GM12878 (cell line): ENCODE measurements at regions of chr22 and their contacts with region 1.

Region 1: DNA sequence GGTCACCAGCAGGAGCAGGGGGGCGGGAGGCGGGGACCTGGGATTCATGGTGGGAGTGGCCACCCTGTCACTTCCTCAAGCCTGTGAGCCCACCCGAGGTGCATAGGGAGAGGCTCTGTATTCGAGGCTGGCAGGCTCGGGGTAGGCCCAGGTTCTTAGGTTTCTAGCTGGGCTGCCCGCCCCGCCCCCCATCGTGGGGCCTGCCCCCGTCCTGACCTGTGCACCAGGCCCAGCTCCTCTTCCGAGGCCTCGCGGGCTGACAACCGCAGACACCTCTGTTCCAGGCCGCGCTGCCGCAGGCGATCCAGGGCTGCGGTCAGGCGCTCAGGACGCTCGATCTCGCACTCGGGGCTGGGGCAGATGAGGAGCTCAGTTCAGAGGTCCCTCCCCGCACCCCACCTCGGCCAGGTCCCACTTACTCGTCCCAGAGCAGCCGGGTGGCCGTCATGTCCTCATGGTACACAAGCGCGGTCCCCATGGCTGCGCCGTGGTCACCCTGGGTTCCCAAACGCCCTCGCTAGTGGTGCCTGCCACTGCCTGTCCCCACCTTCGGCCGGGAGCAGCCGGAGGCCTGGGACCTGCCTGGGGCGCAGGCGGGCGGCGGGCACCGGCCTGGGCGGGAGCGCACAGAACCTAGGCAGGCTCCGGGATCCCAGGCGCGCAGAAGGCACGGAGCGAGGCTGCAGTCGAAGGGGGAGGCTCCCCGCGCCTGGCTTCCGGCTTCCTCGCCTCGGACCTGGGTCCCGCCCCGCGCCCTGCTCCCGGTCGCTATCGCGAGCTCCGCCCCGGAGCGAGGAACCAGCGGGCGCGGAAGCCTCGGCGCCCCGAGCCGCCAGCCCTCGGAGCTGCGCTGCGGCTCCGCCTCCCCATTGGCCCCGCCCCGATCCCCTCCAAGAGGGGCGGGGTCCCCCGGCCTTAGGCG is at the start of gene HDAC10:
- DNase-seq: peak; percentile 40
- ATAC-seq: peak; percentile 91
- H3K4me3 ChIP-seq: peak within 1 kb of the TSS; percentile 98
- H3K27ac ChIP-seq: peak within 1 kb of the TSS; percentile 78
- H3K4me1 ChIP-seq: peaks cover 28% of the 10 kb centered on the region
- H3K27me3 ChIP-seq: no peaks in the 10 kb centered on the region
- CTCF ChIP-seq: no peak
- EP300 ChIP-seq: no peak
- POLR2A ChIP-seq: peak; percentile 88
- RAD21 ChIP-seq: no peak
- polyA plus RNA-seq, gene HDAC10: 0.26 to 0.51 TPM

Region 2: DNA sequence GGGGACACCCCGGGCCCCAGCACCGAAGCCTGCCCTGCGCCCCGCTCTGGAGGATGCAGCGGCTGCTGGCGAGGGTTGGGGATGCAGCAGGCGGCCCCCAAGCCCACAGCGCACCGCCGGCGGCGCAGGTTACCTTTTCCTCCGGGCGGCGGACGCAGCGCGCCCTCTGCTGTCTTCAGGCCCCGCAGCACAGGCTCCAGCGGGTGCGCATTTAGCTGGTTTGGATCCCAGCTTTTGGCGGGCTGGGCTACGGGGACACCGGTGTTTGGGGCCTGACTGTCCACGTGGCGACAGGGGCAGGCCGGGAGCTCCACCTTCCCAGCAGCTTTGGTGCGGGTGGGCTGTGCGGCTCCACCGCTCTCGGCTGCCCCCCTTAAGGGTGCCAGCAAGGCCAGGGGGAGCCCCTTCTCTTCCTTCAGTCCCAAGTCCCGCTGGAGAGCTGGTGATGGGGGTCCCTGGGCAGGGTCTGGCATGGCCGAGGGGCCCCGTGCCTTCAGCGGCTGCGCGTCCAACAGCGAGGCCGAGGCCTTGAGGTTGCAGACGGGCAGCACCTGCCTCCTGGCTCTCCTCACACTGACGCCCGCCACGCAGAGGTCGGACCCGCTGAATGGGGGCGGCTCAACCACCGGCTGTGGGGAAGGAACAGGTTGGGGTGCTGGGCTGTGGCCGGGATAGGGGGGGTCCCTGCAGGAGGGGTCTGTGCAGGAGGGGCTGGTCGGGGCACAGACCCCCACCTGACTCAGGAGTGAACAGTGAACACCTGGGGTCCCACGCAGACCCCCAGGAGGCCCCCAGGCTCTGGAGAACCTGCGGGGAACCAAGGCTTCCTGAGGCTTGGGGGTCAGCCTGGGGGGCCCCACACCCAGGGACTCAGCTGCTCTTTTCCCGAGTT is 220.3 kb before region 1 on chr22:
- CTCF ChIA-PET with region 1: no interaction called
- POLR2A ChIA-PET with region 1: no interaction called
- RAD21 ChIA-PET with region 1: no interaction called
- SMC1A ChIA-PET with region 1: no interaction called
- in situ Hi-C with region 1: no loop called
- intact Hi-C with region 1: no loop called
- DNase-seq: no peak
- ATAC-seq: peak; percentile 98
- H3K4me3 ChIP-seq: no peak overlapping the region
- H3K27ac ChIP-seq: no peak overlapping the region
- H3K4me1 ChIP-seq: peaks cover 6% of the 10 kb centered on the region; the same call in 1 of the 2 replicates
- H3K27me3 ChIP-seq: peaks cover 0 to 4% of the 10 kb centered on the region in 2 experiments; a peak in 1 of 4 replicates
- CTCF ChIP-seq: peak; percentile 84 to 94 (median 94)
- EP300 ChIP-seq: no peak
- POLR2A ChIP-seq: no peak
- RAD21 ChIP-seq: peak; percentile 91

Region 3: DNA sequence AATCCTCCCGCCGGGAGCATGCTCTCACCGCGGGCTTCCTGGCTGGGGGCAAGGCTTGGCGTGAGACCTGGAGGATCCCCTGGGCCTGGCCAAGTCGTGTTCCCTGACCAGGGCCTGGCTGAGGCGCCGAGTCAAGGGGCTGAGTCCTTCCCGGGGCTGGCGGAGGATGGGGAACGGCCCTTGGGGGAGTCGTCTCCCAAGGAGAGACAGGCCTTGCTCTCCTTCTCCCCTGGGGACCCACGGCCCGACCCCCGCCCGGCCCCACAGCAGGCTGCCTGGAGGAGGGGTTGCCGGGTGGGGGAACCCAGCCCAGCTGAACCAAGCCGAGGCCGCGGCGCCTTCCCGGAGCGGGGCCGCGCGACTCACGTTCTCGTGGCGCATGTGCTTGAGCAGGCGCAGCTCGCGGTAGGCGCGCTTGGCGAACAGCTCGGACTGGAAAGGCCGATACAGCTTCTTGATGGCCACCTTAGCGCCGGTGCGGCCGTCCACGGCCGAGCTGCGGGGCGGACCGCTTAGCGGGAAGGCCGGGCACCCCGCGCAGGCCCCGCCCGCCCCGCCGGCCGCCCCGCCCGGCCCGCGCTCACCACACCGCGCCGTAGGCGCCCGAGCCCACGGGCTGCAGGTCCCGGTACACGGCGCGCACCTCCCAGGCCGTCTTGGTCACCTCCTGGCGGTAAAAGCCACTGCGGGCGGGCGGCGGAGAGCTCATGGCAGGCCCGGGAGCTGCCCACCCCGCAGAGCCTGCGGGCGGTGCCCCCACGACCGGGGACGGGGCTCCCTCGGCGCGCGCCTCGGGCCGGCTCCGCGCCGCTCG is 10.2 kb after region 1 on chr22:
- CTCF ChIA-PET with region 1: interaction called, 10 read pairs
- POLR2A ChIA-PET with region 1: interaction called, 15 read pairs
- RAD21 ChIA-PET with region 1: interaction called, 6 read pairs
- SMC1A ChIA-PET with region 1: interaction called, 3 read pairs
- in situ Hi-C with region 1: no loop called
- intact Hi-C with region 1: no loop called
- DNase-seq: no peak
- ATAC-seq: peak; percentile 66
- H3K4me3 ChIP-seq: peak overlapping the region; percentile 89
- H3K27ac ChIP-seq: peak overlapping the region; percentile 52
- H3K4me1 ChIP-seq: peaks cover 14% of the 10 kb centered on the region
- H3K27me3 ChIP-seq: no peaks in the 10 kb centered on the region
- CTCF ChIP-seq: no peak
- EP300 ChIP-seq: no peak
- POLR2A ChIP-seq: peak; percentile 74
- RAD21 ChIP-seq: no peak

Region 4: GRCh38 chr22:50276143-50276542 is 25.3 kb after region 1 on chr22:
- CTCF ChIA-PET with region 1: interaction called, 20 read pairs
- POLR2A ChIA-PET with region 1: interaction called, 7 read pairs
- RAD21 ChIA-PET with region 1: interaction called, 3 read pairs
- SMC1A ChIA-PET with region 1: no interaction called
- in situ Hi-C with region 1: no loop called
- intact Hi-C with region 1: no loop called
- DNase-seq: peak; percentile 66
- ATAC-seq: peak; percentile 87
- H3K4me3 ChIP-seq: no peak overlapping the region
- H3K27ac ChIP-seq: no peak overlapping the region
- H3K4me1 ChIP-seq: peaks cover 3% of the 10 kb centered on the region
- H3K27me3 ChIP-seq: no peaks in the 10 kb centered on the region
- CTCF ChIP-seq: peak; percentile 62 to 77 (median 73)
- EP300 ChIP-seq: no peak
- POLR2A ChIP-seq: no peak
- RAD21 ChIP-seq: peak; percentile 36; the same call in 1 of the 2 replicates

Region 5: GRCh38 chr22:50341977-50342650 is 91.3 kb after region 1 on chr22:
- CTCF ChIA-PET with region 1: interaction called, 20 read pairs
- POLR2A ChIA-PET with region 1: interaction called, 3 read pairs
- RAD21 ChIA-PET with region 1: interaction called, 26 read pairs
- SMC1A ChIA-PET with region 1: interaction called, 5 read pairs
- in situ Hi-C with region 1: no loop called
- intact Hi-C with region 1: loop called (anchors 1 kb)
- DNase-seq: no peak
- ATAC-seq: peak; percentile 88
- H3K4me3 ChIP-seq: peak overlapping the region; percentile 80
- H3K27ac ChIP-seq: peak overlapping the region; percentile 51; the same call in 1 of the 2 replicates
- H3K4me1 ChIP-seq: 0 out of 2 replicates have a peak, but pooled peaks cover 3% of the 10 kb centered on the region
- H3K27me3 ChIP-seq: no peaks in the 10 kb centered on the region
- CTCF ChIP-seq: peak; percentile 96 to 99 (median 96); a peak in 5 of 6 replicates
- EP300 ChIP-seq: no peak
- POLR2A ChIP-seq: no peak
- RAD21 ChIP-seq: peak; percentile 93

Region 6: GRCh38 chr22:50612528-50613221 is 361.9 kb after region 1 on chr22:
- CTCF ChIA-PET with region 1: no interaction called
- POLR2A ChIA-PET with region 1: no interaction called
- RAD21 ChIA-PET with region 1: no interaction called
- SMC1A ChIA-PET with region 1: no interaction called
- in situ Hi-C with region 1: loop called (anchors 10 kb)
- intact Hi-C with region 1: no loop called
- DNase-seq: no peak
- ATAC-seq: peak; percentile 83
- H3K4me3 ChIP-seq: no peak overlapping the region
- H3K27ac ChIP-seq: no peak overlapping the region
- H3K4me1 ChIP-seq: no peaks in the 10 kb centered on the region
- H3K27me3 ChIP-seq: no peaks in the 10 kb centered on the region; a peak in 1 of 4 replicates
- CTCF ChIP-seq: no peak
- EP300 ChIP-seq: no peak
- POLR2A ChIP-seq: no peak
- RAD21 ChIP-seq: no peak

Region 7: DNA sequence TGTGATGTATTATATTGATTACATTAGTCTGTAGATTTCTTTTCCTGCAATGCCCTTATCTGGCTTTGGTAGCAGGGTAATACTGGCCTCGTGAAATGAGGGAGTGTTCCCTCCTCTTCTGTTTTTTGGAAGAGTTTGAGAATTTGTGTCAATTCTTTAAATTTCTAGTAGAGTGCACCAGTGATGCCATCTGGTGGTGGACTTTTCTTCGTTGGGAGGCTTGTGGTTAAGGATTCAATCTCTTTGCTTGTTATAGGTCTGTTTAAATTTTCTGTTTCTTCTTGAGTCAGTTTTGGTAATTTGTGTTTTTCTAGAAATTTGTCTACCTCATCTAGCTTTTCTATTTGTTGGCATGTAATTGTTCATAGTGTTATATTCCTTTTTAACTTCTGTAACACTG is 440.7 kb after region 1 on chr22:
- CTCF ChIA-PET with region 1: no interaction called
- POLR2A ChIA-PET with region 1: no interaction called
- RAD21 ChIA-PET with region 1: no interaction called
- SMC1A ChIA-PET with region 1: no interaction called
- in situ Hi-C with region 1: no loop called
- intact Hi-C with region 1: loop called (anchors 5 kb)
- DNase-seq: peak; percentile 13
- ATAC-seq: peak; percentile 47
- H3K4me3 ChIP-seq: no peak overlapping the region
- H3K27ac ChIP-seq: no peak overlapping the region
- H3K4me1 ChIP-seq: no peaks in the 10 kb centered on the region
- H3K27me3 ChIP-seq: no peaks in the 10 kb centered on the region; a peak in 2 of 4 replicates
- CTCF ChIP-seq: peak; percentile 35 to 55 (median 55); a peak in 5 of 6 replicates
- EP300 ChIP-seq: no peak
- POLR2A ChIP-seq: no peak
- RAD21 ChIP-seq: peak; percentile 74